OCI-LY7 (cell line): ENCODE measurements at regions of chr14 and their contacts with region 1.

Region 1: DNA sequence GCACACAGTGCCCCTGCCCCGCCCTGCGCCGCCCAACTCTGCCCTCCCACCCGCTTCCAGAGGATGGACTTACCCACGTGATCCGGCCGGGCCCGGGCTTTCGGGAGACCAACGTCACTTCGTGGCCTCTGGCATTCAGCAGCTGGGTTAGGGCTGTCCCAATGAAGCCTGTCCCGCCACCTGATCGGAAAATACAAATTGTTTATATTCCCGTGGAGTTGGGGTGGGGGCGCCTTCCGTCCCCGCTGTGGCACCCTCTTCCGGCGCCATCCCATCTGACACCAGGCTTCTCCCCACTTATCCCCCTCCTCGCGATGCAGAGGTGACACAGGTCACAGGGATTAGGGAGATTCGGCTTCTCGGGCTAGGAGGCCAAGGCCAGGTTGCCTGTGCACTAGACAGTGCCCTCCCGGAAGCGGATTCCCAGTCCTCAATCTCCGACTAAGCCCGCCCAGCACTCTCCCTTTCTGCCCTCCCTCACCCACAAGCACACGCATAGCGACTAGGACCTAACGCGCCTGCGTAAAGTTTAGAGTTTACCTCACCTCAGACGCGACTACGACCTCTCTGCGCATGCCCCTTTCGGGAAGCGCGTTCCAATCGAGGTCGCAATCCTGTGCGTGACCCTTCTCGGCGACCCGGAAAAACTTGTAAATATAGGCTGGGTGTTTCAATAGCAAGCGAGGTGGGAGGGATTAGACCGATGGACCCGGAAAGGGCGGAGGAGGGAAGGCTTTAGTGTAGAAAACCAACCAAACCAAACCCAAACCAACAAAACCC is at the start of gene SDR39U1:
- DNase-seq: peak; percentile 99
- H3K4me3 ChIP-seq: peak within 1 kb of the TSS; percentile 83
- H3K27ac ChIP-seq: peak within 1 kb of the TSS; percentile 78
- H3K4me1 ChIP-seq: peaks cover 27% of the 10 kb centered on the region
- CTCF ChIP-seq: no peak
- total RNA-seq, gene SDR39U1: 51.4 and 54.0 TPM in 2 replicates

Region 2: GRCh38 chr14:23555882-23556699 is 886.4 kb before region 1 on chr14 and contains the start of gene THTPA:
- CTCF ChIA-PET with region 1: no interaction called
- POLR2A ChIA-PET with region 1: no interaction called
- intact Hi-C with region 1: loop called (anchors 10 kb)
- DNase-seq: peak; percentile 93
- H3K4me3 ChIP-seq: peak within 1 kb of the TSS; percentile 72
- H3K27ac ChIP-seq: peak within 1 kb of the TSS; percentile 58
- H3K4me1 ChIP-seq: peaks cover 27% of the 10 kb centered on the region
- CTCF ChIP-seq: no peak
- total RNA-seq, gene THTPA: 20.9 and 28.6 TPM in 2 replicates

Region 3: GRCh38 chr14:24171422-24172260 is 270.8 kb before region 1 on chr14 and contains the start of gene REC8:
- CTCF ChIA-PET with region 1: no interaction called
- POLR2A ChIA-PET with region 1: no interaction called
- intact Hi-C with region 1: no loop called
- DNase-seq: no peak
- H3K4me3 ChIP-seq: no peak within 1 kb of the TSS
- H3K27ac ChIP-seq: no peak within 1 kb of the TSS
- H3K4me1 ChIP-seq: no peaks in the 10 kb centered on the region
- CTCF ChIP-seq: no peak
- total RNA-seq, gene REC8: 4.3 and 9.8 TPM in 2 replicates

Region 4: DNA sequence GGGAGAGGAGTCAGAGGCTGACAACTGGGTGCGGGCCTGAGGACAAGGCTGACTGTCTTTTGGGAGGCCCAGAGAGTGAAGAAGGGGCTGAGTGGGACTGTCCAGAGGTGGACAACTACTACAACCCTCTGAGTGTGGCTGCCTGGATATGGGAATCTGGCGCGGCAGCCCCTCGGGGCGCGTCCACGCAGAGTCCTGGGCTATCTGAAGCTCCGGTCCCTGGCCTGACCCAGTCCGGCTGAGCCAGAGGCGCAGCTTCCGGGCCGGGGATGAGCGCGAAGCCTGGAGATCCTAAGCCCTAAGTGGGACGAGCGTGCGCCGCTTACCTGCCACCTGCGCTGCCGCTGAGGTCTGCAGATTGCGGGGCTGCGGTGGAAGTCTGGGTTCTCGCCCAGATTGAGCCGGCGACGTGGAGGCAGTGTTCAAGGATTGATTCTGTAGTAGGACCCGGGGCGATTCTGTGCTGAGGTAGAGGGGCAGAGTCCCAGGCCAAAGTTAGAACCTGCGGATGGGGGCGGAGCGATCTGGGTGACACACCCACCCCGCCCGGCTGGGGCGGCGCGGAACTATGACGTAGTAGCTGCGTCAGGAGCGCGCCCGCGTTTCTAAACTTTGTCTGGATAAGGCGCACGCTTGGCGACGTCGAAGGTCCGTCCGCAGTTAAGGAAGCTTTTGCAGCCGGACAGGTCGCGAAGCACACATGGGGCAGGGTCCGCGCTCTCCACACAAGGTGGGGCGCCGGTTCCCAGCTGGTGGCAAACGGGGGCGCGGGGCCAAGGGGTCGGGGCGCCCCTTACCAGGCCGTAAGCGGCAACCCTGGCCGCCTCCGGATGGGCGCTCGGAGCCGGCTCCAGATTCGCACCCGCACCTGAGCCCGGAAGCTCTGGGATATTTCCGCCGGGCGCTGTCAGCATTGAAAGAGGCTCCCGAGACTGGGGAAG is 142.9 kb before region 1 on chr14 and contains the starts of genes DHRS1 and NOP9:
- CTCF ChIA-PET with region 1: no interaction called
- POLR2A ChIA-PET with region 1: no interaction called
- intact Hi-C with region 1: no loop called
- DNase-seq: peak; percentile 94
- H3K4me3 ChIP-seq: peak within 1 kb of the TSS; percentile 99
- H3K27ac ChIP-seq: peak within 1 kb of the TSS; percentile 38
- H3K4me1 ChIP-seq: peaks cover 30% of the 10 kb centered on the region
- CTCF ChIP-seq: no peak
- total RNA-seq, gene DHRS1: 21.0 and 27.4 TPM in 2 replicates
- total RNA-seq, gene NOP9: 30.6 and 33.2 TPM in 2 replicates

Region 5: GRCh38 chr14:24473211-24473610 is 30.7 kb after region 1 on chr14:
- CTCF ChIA-PET with region 1: no interaction called
- POLR2A ChIA-PET with region 1: no interaction called
- intact Hi-C with region 1: no loop called
- DNase-seq: no peak
- H3K4me3 ChIP-seq: no peak overlapping the region
- H3K27ac ChIP-seq: no peak overlapping the region
- H3K4me1 ChIP-seq: no peaks in the 10 kb centered on the region
- CTCF ChIP-seq: no peak

Region 6: GRCh38 chr14:24710403-24711112 is 268.1 kb after region 1 on chr14:
- CTCF ChIA-PET with region 1: no interaction called
- POLR2A ChIA-PET with region 1: no interaction called
- intact Hi-C with region 1: no loop called
- DNase-seq: peak; percentile 61
- H3K4me3 ChIP-seq: no peak overlapping the region
- H3K27ac ChIP-seq: no peak overlapping the region
- H3K4me1 ChIP-seq: peaks cover 8% of the 10 kb centered on the region
- CTCF ChIP-seq: peak; percentile 90